Esophagus muscularis mucosa (tissue), 4 donors: ENCODE measurements at regions of chr1 and their contacts with region 1.

Region 1: GRCh38 chr1:26035959-26036755 is 9.8 kb downstream of the SLC30A2 start:
- DNase-seq: peak; percentile 95
- H3K4me3 ChIP-seq: peak overlapping the region; percentile 75 to 84 (median 82)
- H3K27ac ChIP-seq: peak overlapping the region; percentile 87 to 91 (median 90)
- H3K4me1 ChIP-seq: peaks cover 16 to 26% (median 19%) of the 10 kb centered on the region in 4 donors
- H3K27me3 ChIP-seq: peaks cover 0 to 30% (median 0%) of the 10 kb centered on the region in 4 donors
- CTCF ChIP-seq: peak in 2 of 3 experiments; percentile 99
- EP300 ChIP-seq: no peak
- POLR2A ChIP-seq: no peak

Region 2: GRCh38 chr1:26145041-26145959 is 109.1 kb after region 1 on chr1:
- intact Hi-C with region 1: loop called (anchors 2 kb)
- DNase-seq: peak; percentile 93
- H3K4me3 ChIP-seq: no peak overlapping the region
- H3K27ac ChIP-seq: no peak overlapping the region
- H3K4me1 ChIP-seq: peaks cover 2 to 10% (median 6%) of the 10 kb centered on the region in 4 donors
- H3K27me3 ChIP-seq: peaks cover 0 to 23% (median 0%) of the 10 kb centered on the region in 4 donors
- CTCF ChIP-seq: peak; percentile 74 to 79 (median 78)
- EP300 ChIP-seq: no peak
- POLR2A ChIP-seq: no peak

Region 3: DNA sequence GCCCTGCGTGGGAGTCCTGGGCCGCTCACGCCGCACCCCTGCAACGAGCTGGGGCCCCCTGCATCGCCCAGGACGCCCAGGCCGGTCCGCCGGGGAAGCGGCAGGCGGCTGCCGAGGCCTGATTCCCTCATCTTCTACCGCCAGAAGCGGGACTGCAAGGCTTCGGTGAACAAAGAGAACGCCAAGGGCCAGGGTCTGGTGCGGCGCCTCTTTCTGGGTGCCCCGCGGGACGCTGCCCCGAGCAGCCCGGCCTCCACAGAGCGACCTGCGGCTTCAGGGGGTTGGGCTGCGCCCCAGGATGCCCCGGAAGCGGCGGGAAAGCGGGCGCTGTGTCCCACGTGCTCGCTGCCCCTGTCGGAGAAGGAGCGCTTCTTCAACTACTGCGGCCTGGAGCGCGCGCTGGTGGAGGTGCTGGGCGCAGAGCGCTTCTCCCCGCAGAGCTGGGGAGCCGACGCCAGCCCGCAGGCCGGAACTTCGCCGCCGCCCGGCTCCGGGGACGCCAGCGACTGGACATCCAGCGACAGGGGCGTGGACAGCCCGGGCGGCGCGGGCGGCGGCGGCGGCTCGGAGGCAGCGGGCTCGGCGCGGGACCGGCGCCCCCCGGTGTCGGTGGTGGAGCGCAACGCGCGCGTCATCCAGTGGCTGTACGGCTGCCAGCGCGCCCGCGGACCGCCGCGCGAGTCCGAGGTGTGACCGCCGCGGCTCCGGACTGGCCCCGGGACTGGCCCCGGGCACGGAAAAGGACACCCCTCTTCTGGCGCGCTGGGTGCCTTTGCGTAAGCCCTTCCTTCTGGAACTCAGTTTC is 125.5 kb after region 1 on chr1:
- intact Hi-C with region 1: loop called (anchors 5 kb)
- DNase-seq: no peak
- H3K4me3 ChIP-seq: peak overlapping the region; percentile 54 to 66 (median 63)
- H3K27ac ChIP-seq: peak overlapping the region; percentile 58 to 71 (median 67)
- H3K4me1 ChIP-seq: peaks cover 29 to 60% (median 33%) of the 10 kb centered on the region in 4 donors
- H3K27me3 ChIP-seq: peaks cover 0 to 22% (median 4%) of the 10 kb centered on the region in 4 donors
- CTCF ChIP-seq: peak in 2 of 3 experiments; percentile 22 to 29
- EP300 ChIP-seq: no peak
- POLR2A ChIP-seq: no peak

Region 4: DNA sequence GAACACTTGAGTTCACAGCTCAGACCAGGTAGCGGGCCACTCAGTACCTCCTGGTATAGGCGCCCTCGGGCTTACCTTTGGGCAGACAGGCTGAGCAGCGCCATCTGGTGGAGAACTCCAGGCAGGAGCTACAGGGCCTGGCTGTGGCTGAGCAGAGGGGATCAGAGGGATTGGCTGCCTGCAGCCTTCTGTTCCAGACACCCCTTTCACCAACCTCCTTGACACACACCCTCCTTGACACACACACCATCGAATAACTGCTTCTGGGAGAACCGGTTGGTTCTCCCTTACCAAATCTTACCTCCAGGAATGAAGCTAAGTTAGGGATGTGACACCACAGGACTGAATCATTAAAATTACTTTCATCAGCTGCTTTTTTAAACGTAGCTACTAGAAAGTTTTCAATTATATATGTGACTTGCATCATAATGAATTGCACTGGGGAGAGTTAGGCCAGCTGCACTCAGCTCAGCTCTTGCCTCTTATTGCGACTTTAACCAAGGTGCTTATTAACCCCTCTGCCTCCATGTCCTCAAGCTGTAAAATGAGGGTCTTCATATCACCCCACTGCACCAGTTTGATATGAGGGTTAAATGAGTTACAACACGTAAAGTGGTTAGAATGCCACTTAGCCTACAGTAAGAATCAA is 381.1 kb after region 1 on chr1:
- intact Hi-C with region 1: no loop called
- DNase-seq: no peak
- H3K4me3 ChIP-seq: no peak overlapping the region
- H3K27ac ChIP-seq: no peak overlapping the region
- H3K4me1 ChIP-seq: no peaks in the 10 kb centered on the region
- H3K27me3 ChIP-seq: peaks cover 0 to 68% (median 15%) of the 10 kb centered on the region in 4 donors
- CTCF ChIP-seq: peak; percentile 46 to 80 (median 68)
- EP300 ChIP-seq: no peak
- POLR2A ChIP-seq: no peak